ENCODE measurements at regions of chr1 and their contacts with region 1.

Region 1: GRCh38 chr1:10494754-10495474 is 20.2 kb downstream of the PEX14 start:
- H3K4me3 Mint-ChIP-seq: peak overlapping the region; percentile 66
- H3K27ac Mint-ChIP-seq: peak overlapping the region; percentile 71
- H3K4me1 Mint-ChIP-seq: peaks cover 22% of the 10 kb centered on the region
- H3K27me3 Mint-ChIP-seq: no peaks in the 10 kb centered on the region

Region 2: DNA sequence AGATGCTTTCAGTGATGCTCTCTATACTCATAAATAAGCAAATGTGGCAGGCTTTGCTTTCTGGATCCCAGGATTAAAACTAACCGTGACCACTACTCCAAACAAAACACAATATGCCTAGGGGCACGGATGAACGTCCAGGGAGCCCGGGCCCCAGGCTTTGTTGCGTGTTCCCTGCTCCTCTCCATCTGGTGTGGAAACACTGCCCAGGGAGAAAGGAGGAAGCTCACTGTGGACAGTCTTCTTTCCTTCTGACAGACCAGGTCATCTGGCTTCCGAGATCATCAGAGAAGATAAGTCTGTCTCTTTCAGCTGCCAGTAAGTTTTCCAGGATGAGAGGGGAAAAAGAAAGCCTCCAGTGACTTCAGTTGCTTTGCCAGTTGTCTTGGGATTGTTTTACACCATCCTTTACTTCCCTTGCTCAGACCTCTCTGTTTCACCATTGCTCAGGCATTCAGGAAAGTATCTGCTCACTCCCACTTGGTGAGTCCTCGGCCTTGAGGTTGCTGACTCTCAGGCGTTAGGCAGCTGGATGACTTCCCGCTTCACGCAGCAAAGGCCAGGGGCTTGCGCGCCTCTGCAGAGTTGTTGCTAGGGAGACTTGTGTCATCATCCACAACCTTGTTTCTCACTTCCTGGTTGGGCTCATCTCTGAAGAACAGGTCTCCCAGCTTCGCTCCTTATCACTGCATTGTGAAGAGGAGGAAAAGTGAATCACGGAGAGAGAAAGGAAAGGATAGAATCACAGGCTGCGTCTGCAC is 116.7 kb before region 1 on chr1:
- intact Hi-C with region 1: loop called (anchors 2 kb)
- H3K4me3 Mint-ChIP-seq: no peak overlapping the region
- H3K27ac Mint-ChIP-seq: peak overlapping the region; percentile 82
- H3K4me1 Mint-ChIP-seq: peaks cover 40% of the 10 kb centered on the region
- H3K27me3 Mint-ChIP-seq: no peaks in the 10 kb centered on the region

Region 3: DNA sequence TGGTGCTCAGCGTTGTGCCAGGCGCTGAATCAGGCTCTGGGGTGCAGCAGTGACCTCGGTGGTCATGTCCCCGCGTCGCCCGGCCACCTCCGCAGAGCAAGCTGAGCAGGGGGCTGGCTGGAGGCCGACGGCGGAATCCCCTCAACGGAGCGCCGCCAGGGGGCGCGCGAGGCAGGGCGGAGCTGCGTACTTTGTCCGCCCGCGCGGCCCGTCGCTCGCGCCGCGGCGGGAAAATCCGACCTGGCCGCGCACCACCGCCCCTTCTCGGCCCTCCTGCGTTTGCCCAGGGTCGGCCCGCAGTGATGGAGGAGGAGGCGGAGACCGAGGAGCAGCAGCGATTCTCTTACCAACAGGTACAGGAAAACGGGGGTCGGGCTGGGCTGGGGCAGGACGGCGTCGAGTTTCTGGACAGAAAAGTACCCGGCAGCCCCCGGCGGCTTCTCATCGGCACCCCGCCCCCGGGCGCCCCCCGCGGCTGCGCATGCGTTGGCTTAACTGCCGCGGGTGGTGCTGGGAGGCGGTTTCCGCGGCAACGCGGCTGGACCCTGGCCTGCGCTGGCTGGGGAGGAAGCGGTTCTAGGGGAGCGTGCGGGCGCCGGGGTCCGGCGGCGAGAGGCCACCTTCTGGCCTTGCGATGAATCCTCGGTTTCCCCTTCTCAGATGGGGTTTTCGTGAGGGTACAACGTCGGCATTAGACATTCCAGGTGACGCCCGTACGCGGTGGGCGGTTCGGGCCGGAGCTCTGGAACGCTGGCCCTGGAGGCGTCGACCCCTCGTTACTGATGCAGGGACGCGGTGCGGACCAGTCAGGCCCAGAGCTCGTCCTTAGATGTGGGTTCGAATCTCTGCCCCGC is 64.5 kb before region 1 on chr1 and contains the start of gene CENPS:
- intact Hi-C with region 1: loop called (anchors 1 kb)
- H3K4me3 Mint-ChIP-seq: peak within 1 kb of the TSS; percentile 92
- H3K27ac Mint-ChIP-seq: peak within 1 kb of the TSS; percentile 78
- H3K4me1 Mint-ChIP-seq: peaks cover 43% of the 10 kb centered on the region
- H3K27me3 Mint-ChIP-seq: no peaks in the 10 kb centered on the region

Region 4: DNA sequence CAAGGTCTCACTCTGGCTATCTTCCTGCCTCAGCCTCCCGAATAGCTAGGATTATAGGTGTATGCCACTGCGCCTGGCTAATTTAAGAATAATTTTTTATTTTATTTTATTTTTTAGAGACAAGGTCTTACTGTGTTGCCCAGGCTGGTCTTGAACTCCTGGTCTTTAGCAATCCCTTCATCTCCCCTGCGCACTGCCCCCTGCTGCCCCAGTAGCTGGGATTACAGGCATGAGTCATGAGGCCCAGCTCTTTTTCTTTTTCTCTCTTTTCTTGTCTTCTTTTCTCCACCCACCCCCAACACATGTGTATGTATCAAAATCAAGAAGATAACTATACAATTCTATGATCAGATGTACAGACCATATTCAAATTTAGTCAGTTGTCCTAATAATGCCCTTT is 67.0 kb after region 1 on chr1:
- intact Hi-C with region 1: no loop called
- H3K4me3 Mint-ChIP-seq: no peak overlapping the region
- H3K27ac Mint-ChIP-seq: no peak overlapping the region
- H3K4me1 Mint-ChIP-seq: no peaks in the 10 kb centered on the region
- H3K27me3 Mint-ChIP-seq: no peaks in the 10 kb centered on the region

Region 5: DNA sequence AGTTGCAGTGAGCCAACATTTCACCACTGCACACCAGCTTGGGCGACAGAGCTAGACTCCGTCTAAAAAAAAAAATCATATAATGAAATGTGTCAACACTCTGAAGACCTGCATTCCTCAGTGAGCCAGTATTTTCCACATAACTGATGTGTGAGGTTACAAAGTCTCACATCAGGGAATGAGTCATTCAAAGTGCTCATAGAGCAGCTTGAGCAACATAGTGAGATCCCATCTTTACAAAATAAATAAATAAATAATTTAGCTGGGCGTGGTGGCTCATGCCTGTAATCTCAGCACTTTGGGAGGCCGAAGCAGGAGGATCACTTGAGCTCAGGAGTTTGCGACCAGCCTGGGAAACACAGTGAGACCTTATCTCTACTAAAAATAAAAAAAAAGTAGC is 236.1 kb after region 1 on chr1:
- intact Hi-C with region 1: no loop called
- H3K4me3 Mint-ChIP-seq: no peak overlapping the region
- H3K27ac Mint-ChIP-seq: no peak overlapping the region
- H3K4me1 Mint-ChIP-seq: no peaks in the 10 kb centered on the region
- H3K27me3 Mint-ChIP-seq: peaks cover 8% of the 10 kb centered on the region